ENCODE measurements at regions of chr15 and their contacts with region 1.

Region 1: DNA sequence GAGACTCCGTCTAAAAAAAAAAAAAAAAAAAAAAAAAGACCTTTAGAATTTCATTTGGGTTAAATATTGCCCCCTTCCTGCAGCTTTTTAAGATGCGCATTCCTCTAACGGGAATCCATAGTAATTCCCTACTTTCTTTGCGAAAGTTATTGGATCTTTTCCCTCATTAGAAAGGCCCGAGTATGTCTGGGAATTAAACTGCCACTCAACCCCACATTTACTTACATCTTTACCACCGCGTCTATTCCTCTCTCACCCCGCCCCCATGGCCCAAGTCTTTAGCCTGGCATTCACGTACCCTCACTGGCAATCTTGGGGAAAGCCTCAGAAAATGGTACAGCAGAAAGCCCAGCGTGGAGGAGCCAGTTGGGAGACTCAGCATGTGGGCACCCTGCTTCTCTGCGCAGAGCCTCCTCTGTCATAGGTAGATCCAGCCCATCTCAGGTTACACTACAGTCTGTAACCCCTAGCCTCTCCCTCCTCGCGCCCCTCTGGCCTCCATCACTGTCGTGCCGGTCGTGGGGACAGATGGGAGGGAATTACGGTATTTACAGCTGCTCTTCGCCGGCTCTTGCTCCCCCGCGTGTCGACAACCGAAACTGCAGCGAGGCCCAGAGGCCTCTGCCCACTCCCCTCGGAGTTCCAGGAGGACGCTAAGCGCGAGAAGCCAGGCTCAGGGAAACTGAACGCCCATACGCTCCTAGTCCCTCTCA is 6.4 kb upstream of the ANKDD1A start:
- DNase-seq: peak; percentile 78 to 81 (median 81)
- ATAC-seq: peak; percentile 84
- H3K4me3 ChIP-seq: no peak overlapping the region
- H3K4me1 ChIP-seq: peaks cover 3% of the 10 kb centered on the region
- CTCF ChIP-seq: peak; percentile 67

Region 2: DNA sequence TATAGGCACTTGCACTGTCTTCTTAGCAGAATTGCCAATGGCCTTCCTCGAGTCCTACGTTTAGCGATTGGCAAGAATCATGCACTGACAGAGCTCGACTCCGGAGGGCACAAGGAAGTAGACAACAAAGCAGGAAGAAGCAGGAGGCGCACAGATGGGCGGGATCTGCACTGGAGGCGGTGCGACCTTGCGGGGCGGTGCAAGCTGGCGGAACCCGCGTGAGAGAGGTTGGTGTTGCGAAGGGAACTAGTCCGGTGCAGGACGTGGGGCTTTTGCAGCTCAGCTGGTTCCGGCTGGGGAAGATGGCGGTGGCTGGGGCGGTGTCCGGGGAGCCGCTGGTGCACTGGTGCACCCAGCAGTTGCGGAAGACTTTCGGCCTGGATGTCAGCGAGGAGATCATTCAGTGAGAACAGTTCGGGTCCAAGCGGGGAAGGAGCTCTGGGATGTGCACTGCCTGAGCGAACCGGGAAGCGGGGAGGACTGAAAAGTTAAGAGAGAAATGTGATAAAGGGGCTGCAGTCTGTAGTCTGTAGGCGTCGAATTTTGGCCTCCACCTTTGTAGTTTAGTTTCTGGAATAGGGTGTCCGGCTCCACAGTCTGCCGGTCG is 517.6 kb before region 1 on chr15 and contains the start of gene TRIP4:
- intact Hi-C with region 1: no loop called
- DNase-seq: peak; percentile 94 to 98 (median 97)
- ATAC-seq: peak; percentile 100
- H3K4me3 ChIP-seq: peak within 1 kb of the TSS; percentile 70
- H3K4me1 ChIP-seq: peaks cover 7% of the 10 kb centered on the region
- CTCF ChIP-seq: no peak
- total RNA-seq, gene TRIP4: 23.8 to 36.9 (median 28.2) TPM

Region 3: DNA sequence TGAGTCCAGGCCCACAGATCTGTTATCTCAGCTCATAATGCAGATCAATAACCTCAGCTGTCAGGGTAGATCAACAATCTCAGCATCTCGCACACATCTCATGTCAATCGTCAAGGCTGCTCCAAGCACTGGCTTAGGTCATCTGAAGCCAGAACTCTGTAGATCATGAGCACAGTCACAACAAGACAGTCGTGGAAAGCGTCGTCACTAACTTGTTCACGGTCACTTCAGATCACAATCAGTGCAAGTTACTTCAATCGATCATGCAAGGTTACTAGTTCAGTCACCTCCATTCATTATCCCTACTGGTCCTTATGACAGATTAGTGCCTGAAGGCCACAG is 201.7 kb before region 1 on chr15:
- intact Hi-C with region 1: no loop called
- DNase-seq: no peak
- ATAC-seq: peak; percentile 4
- H3K4me3 ChIP-seq: no peak overlapping the region
- H3K4me1 ChIP-seq: peaks cover 27% of the 10 kb centered on the region
- CTCF ChIP-seq: no peak

Region 4: DNA sequence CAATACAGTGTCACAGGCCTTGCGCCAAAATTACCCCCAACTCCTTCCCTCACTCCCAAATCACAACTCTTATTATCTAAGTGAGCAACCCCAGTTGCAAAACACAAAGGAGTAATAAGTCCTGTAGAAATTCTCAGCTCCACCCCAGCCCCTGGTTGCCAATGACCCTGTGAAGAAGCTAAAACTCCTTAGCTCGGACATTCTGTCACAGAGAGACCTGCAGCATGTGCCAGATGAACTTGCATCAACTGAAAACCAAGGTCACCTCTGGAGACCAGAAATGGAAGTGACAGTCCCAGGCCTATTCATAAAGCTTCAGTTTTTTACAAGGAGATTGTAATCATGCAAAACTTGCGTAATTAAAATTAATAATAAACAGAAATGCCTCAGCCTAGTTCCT is 185.1 kb before region 1 on chr15:
- intact Hi-C with region 1: loop called in 1 of 2 experiments (anchors 10 kb)
- DNase-seq: no peak
- ATAC-seq: no peak
- H3K4me3 ChIP-seq: no peak overlapping the region
- H3K4me1 ChIP-seq: no peaks in the 10 kb centered on the region
- CTCF ChIP-seq: no peak

Region 5: GRCh38 chr15:64825431-64826294 is 79.6 kb before region 1 on chr15 and contains the start of gene PIF1:
- intact Hi-C with region 1: no loop called
- DNase-seq: peak; percentile 84 to 97 (median 84)
- ATAC-seq: peak; percentile 99
- H3K4me3 ChIP-seq: no peak within 1 kb of the TSS
- H3K4me1 ChIP-seq: peaks cover 25% of the 10 kb centered on the region
- CTCF ChIP-seq: no peak
- total RNA-seq, gene PIF1: 2.6 to 10.4 (median 5.0) TPM

Region 6: GRCh38 chr15:64979252-64979710 is 74.0 kb after region 1 on chr15:
- intact Hi-C with region 1: no loop called
- DNase-seq: no peak
- ATAC-seq: no peak
- H3K4me3 ChIP-seq: no peak overlapping the region
- H3K4me1 ChIP-seq: no peaks in the 10 kb centered on the region
- CTCF ChIP-seq: no peak

Measured in mucosa of descending colon (tissue), 3 donors.